Astrocyte of the cerebellum (primary cell): ENCODE measurements at regions of chr3 and their contacts with region 1.

Region 1: GRCh38 chr3:183962807-183963206 is 54.9 kb downstream of the ABCC5 start:
- DNase-seq: no peak
- H3K4me3 ChIP-seq: no peak overlapping the region
- CTCF ChIP-seq: no peak

Region 2: GRCh38 chr3:184005941-184006507 is 43.2 kb after region 1 on chr3:
- in situ Hi-C with region 1: loop called (anchors 5 kb)
- DNase-seq: no peak
- H3K4me3 ChIP-seq: no peak overlapping the region
- CTCF ChIP-seq: no peak